ENCODE measurements at regions of chr19 and their contacts with region 1.

Region 1: GRCh38 chr19:16659831-16660708 is at the start of gene SMIM7:
- DNase-seq: peak; percentile 98
- H3K4me3 Mint-ChIP-seq: peak within 1 kb of the TSS; percentile 92
- H3K27ac Mint-ChIP-seq: peak within 1 kb of the TSS; percentile 92
- H3K4me1 Mint-ChIP-seq: peaks cover 39% of the 10 kb centered on the region
- H3K27me3 Mint-ChIP-seq: peaks cover 6% of the 10 kb centered on the region
- total RNA-seq, gene SMIM7: 51.0 to 59.2 TPM

Region 2: GRCh38 chr19:16473875-16474392 is 186.1 kb before region 1 on chr19:
- CTCF ChIA-PET with region 1: no interaction called
- intact Hi-C with region 1: loop called (anchors 1 kb)
- DNase-seq: no peak
- H3K4me3 Mint-ChIP-seq: no peak overlapping the region
- H3K27ac Mint-ChIP-seq: no peak overlapping the region
- H3K4me1 Mint-ChIP-seq: peaks cover 21% of the 10 kb centered on the region
- H3K27me3 Mint-ChIP-seq: no peaks in the 10 kb centered on the region

Region 3: GRCh38 chr19:16495982-16496612 is 164.0 kb before region 1 on chr19 and contains the starts of genes C19orf44 and CALR3:
- CTCF ChIA-PET with region 1: no interaction called
- intact Hi-C with region 1: loop called (anchors 1 kb)
- DNase-seq: peak; percentile 98
- H3K4me3 Mint-ChIP-seq: peak within 1 kb of the TSS; percentile 95
- H3K27ac Mint-ChIP-seq: peak within 1 kb of the TSS; percentile 64
- H3K4me1 Mint-ChIP-seq: peaks cover 15% of the 10 kb centered on the region
- H3K27me3 Mint-ChIP-seq: no peaks in the 10 kb centered on the region
- total RNA-seq, gene C19orf44: 2.1 to 2.6 TPM
- total RNA-seq, gene CALR3: not detected

Region 4: DNA sequence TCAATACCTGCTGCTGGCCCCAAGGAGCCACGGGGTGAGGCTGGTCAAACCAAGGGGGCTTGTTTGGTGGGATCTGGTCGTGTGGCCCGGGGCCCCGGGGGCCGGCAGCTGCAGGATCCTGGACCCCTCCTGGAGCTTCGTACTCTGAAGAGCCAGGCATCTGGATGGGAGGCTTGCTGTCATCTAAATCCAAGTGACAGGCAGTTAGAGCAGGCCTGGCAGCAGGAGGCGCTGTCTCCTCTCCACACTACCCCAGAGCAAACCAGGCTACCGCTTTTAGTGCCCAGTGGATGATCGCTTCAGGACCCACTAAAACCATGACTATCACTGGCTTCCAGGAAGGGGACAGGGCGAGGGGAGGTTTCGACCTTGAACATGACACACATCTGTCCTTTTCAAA is 132.0 kb before region 1 on chr19:
- CTCF ChIA-PET with region 1: no interaction called
- intact Hi-C with region 1: no loop called
- DNase-seq: peak; percentile 57
- H3K4me3 Mint-ChIP-seq: no peak overlapping the region
- H3K27ac Mint-ChIP-seq: no peak overlapping the region
- H3K4me1 Mint-ChIP-seq: no peaks in the 10 kb centered on the region
- H3K27me3 Mint-ChIP-seq: no peaks in the 10 kb centered on the region

Region 5: GRCh38 chr19:16584248-16585141 is 75.6 kb before region 1 on chr19:
- CTCF ChIA-PET with region 1: interaction called, 4 read pairs
- intact Hi-C with region 1: loop called (anchors 1 kb)
- DNase-seq: peak; percentile 96
- H3K4me3 Mint-ChIP-seq: peak overlapping the region; percentile 79
- H3K27ac Mint-ChIP-seq: peak overlapping the region; percentile 82
- H3K4me1 Mint-ChIP-seq: peaks cover 79% of the 10 kb centered on the region
- H3K27me3 Mint-ChIP-seq: no peaks in the 10 kb centered on the region

Region 6: GRCh38 chr19:16676101-16676792 is 16.2 kb after region 1 on chr19:
- CTCF ChIA-PET with region 1: no interaction called
- intact Hi-C with region 1: no loop called
- DNase-seq: no peak
- H3K4me3 Mint-ChIP-seq: no peak overlapping the region
- H3K27ac Mint-ChIP-seq: no peak overlapping the region
- H3K4me1 Mint-ChIP-seq: no peaks in the 10 kb centered on the region
- H3K27me3 Mint-ChIP-seq: no peaks in the 10 kb centered on the region

Region 7: DNA sequence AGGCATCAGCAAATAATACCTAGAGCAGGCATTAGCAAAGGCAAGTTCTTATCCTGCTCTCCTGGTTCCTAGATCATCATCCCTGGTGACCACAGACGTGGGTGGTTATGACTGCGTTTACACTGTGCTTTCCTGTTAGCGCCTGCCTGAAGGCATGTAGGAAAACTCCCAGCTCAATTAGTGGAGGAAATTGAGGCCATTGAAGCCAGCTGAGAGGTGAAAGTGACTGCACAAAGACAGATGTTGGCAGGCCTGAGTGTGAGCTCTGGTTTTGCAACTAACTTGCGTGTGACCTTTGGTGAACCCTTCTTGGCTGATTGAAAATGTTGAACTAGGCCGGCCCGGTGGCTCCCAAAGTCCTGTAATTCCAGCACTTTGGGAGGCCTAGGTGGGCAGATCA is 42.0 kb after region 1 on chr19:
- CTCF ChIA-PET with region 1: no interaction called
- intact Hi-C with region 1: no loop called
- DNase-seq: no peak
- H3K4me3 Mint-ChIP-seq: no peak overlapping the region
- H3K27ac Mint-ChIP-seq: no peak overlapping the region
- H3K4me1 Mint-ChIP-seq: no peaks in the 10 kb centered on the region
- H3K27me3 Mint-ChIP-seq: peaks cover 3% of the 10 kb centered on the region

Measured in activated naive CD4-positive, alpha-beta T cell treated with anti-CD3 and anti-CD28 coated beads for 36 hours (primary cell).